CD14-positive monocyte (primary cell): ENCODE measurements at regions of chr13 and their contacts with region 1.

Region 1: DNA sequence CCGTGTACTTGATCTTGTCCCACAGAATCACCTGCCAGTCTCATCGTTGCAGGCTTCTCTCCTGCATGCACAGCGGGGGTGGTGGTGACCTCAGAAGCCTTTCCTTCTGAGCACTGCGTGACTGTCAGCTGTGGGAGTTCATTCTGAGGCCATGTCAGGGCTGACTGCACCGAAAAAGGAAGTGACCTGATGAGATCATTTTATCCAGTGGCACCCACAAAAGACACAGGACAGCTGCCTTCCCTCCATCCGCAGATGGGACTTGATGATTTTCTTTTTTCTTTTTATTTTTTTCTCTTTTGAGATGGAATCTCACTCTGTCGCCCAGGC is 89.7 kb downstream of the RAB20 start:
- DNase-seq: peak; percentile 86 to 94 (median 91)
- H3K4me3 ChIP-seq: no peak overlapping the region
- H3K4me3 Mint-ChIP-seq: peak overlapping the region; percentile 70 to 84
- H3K27ac ChIP-seq: peak overlapping the region; percentile 52 to 62
- H3K27ac Mint-ChIP-seq: peak overlapping the region; percentile 85 to 97 (median 95)
- H3K4me1 ChIP-seq: peaks cover 21 to 26% of the 10 kb centered on the region in 2 donors
- H3K4me1 Mint-ChIP-seq: peaks cover 26% of the 10 kb centered on the region
- H3K27me3 ChIP-seq: no peaks in the 10 kb centered on the region
- H3K27me3 Mint-ChIP-seq: peaks cover 6 to 8% (median 6%) of the 10 kb centered on the region in 3 donors
- CTCF ChIP-seq: no peak

Region 2: GRCh38 chr13:110525328-110526319 is 53.8 kb after region 1 on chr13:
- intact Hi-C with region 1: loop called (anchors 2 to 5 kb)
- DNase-seq: no peak
- H3K4me3 ChIP-seq: no peak overlapping the region
- H3K4me3 Mint-ChIP-seq: no peak overlapping the region
- H3K27ac ChIP-seq: no peak overlapping the region
- H3K27ac Mint-ChIP-seq: peak overlapping the region in 2 of 7 donors; percentile 42 to 71
- H3K4me1 ChIP-seq: peaks cover 76 to 89% of the 10 kb centered on the region in 2 donors
- H3K4me1 Mint-ChIP-seq: peaks cover 90% of the 10 kb centered on the region
- H3K27me3 ChIP-seq: no peaks in the 10 kb centered on the region
- H3K27me3 Mint-ChIP-seq: peaks cover 0 to 8% (median 0%) of the 10 kb centered on the region in 3 donors
- CTCF ChIP-seq: no peak